Panc1 (cell line): ENCODE measurements at regions of chr1 and their contacts with region 1.

Region 1: DNA sequence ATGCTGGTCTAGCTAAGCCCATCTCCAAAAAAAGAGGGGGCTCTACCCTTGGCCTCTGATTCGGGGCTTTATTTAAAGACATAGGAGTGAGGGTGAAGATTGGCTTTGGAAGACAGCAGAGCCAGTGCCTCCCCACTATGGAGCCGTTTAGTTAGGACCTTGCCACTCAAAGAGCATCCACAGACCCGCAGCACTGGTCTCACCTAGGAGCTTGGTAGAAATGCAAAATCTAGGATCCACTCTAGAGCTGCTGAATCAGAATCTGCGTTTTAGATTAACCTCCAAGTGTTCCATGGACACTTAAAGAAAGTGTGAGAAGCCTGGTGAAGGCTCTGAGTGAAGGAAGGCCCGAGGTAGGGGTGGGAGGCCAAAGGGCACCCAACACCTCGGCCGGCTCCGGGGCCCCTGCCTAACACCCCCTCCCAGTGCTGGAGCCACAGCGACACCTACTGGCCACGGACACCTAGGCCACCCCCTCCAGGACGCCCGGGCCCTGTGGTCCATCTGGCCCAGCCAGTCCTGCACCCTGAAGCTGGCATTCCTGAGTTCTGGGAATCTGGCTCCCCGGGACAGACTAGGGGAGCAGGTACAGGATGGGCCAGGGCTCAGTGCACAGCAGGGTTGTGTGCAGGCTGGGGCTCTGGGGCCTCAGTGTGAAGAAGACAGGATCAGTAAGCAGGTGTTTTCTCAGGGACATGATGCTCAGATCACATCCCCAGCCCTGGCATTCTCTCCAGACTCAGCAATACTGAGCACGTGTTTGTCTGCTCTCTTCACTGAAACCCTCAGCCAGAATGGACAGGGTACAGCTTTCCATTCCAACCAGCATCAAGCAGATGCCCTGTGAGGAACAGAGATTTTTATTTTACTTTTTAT is 79.2 kb downstream of the TMEM53 start:
- DNase-seq: no peak
- ATAC-seq: peak; percentile 98
- H3K4me3 ChIP-seq: no peak overlapping the region
- H3K27ac ChIP-seq: no peak overlapping the region
- H3K4me1 ChIP-seq: no peaks in the 10 kb centered on the region
- H3K27me3 ChIP-seq: no peaks in the 10 kb centered on the region
- CTCF ChIP-seq: peak; percentile 97

Region 2: DNA sequence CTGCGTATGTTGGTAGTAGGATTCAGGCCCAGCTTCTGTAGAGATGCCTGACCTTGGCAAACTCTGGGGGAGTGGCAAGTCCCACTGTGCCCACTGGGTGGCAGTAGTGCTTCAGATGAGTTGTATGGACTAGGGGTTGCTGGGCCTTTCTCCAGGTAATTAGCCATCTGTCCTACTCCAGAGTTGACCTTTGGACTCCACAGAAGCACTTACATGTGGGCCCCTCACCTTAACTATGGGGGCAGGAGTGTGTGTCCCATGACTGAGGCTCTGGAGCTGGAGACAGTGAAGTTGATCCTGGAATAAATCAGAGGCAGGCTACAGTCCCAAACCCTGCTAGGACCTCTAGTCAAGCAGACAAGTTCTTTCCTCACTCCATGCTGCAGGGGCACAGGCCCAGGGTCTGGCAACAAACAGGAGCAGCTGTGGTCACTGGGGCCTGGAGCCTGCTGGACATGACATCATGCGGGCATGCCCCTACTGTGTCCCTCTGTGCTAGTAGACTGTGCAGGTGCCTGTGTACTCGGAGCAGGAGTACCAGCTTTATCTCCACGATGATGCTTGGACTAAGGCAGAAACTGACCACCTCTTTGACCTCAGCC is 377.2 kb before region 1 on chr1:
- CTCF ChIA-PET with region 1: interaction called, 5 read pairs
- POLR2A ChIA-PET with region 1: no interaction called
- in situ Hi-C with region 1: no loop called
- intact Hi-C with region 1: loop called (anchors 5 kb)
- DNase-seq: peak; percentile 61
- ATAC-seq: peak; percentile 78
- H3K4me3 ChIP-seq: no peak overlapping the region
- H3K27ac ChIP-seq: no peak overlapping the region
- H3K4me1 ChIP-seq: peaks cover 5% of the 10 kb centered on the region
- H3K27me3 ChIP-seq: no peaks in the 10 kb centered on the region
- CTCF ChIP-seq: peak; percentile 94

Region 3: DNA sequence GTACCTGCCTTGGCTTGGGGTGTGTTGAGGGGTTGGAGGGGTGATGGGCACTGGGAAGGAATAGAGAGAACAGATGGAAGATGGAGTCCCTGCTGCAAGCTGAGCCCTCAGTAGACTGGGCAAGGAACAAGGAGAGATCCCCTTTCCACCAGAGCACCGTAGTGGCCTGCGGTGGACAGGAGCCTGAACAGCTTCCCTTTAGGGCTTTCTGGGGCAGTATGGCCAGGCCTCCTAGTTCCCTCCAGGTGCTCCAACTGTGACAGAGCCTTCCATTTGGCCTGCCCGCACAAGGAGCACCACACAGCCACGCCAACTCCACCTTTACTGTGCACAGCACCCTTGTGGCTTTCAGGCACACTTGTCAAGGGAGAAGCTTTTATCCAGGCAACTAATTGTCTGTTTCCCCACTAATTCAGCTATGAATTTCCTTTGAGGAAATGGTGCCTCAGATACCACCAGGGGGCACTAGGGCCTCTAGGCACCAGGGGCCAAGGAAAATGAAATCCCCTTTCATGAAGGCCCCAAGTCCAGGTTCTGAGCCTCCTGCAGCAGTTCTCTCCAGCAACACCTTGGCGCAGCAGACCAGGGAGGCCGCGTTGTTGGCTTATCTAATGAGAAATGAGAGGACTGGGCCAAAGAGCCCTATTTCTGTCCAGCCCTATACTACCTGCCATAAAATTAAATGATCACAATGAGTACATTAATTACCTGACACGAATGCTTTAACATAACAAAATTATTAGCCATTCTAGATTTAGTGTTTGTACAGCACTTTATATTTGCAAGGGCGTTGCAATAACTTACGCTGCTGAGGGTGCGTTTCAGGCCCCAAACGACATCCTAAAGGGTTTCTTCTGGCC is 217.0 kb before region 1 on chr1:
- CTCF ChIA-PET with region 1: interaction called, 11 read pairs
- POLR2A ChIA-PET with region 1: no interaction called
- in situ Hi-C with region 1: no loop called
- intact Hi-C with region 1: loop called (anchors 2 kb)
- DNase-seq: no peak
- ATAC-seq: peak; percentile 81
- H3K4me3 ChIP-seq: no peak overlapping the region
- H3K27ac ChIP-seq: no peak overlapping the region
- H3K4me1 ChIP-seq: no peaks in the 10 kb centered on the region
- H3K27me3 ChIP-seq: no peaks in the 10 kb centered on the region
- CTCF ChIP-seq: peak; percentile 83

Region 4: DNA sequence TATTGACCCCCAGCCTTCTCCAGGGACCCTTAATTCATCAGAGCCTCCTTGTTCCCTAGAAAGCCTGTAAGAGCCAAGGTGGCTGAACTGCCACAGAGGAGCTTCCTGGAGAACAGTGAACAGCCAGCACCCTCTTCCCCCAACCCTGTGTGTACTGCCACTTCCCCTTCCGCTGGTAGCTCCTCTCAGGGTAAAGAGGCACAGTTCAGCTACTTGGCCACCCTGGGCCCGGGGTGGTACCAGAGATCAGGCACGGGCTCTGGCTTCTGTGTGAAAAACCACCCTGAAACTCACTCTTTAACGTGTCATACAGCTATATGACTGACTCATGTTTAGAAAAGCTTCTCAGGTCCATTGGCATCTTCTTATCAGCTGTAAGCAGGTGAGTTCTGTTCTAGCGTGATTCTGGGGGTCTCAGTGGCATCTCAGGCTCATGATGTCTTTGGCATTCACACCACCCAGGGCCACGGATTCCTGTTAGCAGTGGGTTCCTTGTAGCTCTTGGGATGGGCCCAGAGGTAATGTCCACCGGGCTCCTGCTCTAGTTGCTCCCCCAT is 101.8 kb after region 1 on chr1:
- CTCF ChIA-PET with region 1: no interaction called
- POLR2A ChIA-PET with region 1: no interaction called
- in situ Hi-C with region 1: no loop called
- intact Hi-C with region 1: no loop called
- DNase-seq: no peak
- ATAC-seq: no peak
- H3K4me3 ChIP-seq: no peak overlapping the region
- H3K27ac ChIP-seq: no peak overlapping the region
- H3K4me1 ChIP-seq: no peaks in the 10 kb centered on the region
- H3K27me3 ChIP-seq: no peaks in the 10 kb centered on the region
- CTCF ChIP-seq: no peak

Region 5: DNA sequence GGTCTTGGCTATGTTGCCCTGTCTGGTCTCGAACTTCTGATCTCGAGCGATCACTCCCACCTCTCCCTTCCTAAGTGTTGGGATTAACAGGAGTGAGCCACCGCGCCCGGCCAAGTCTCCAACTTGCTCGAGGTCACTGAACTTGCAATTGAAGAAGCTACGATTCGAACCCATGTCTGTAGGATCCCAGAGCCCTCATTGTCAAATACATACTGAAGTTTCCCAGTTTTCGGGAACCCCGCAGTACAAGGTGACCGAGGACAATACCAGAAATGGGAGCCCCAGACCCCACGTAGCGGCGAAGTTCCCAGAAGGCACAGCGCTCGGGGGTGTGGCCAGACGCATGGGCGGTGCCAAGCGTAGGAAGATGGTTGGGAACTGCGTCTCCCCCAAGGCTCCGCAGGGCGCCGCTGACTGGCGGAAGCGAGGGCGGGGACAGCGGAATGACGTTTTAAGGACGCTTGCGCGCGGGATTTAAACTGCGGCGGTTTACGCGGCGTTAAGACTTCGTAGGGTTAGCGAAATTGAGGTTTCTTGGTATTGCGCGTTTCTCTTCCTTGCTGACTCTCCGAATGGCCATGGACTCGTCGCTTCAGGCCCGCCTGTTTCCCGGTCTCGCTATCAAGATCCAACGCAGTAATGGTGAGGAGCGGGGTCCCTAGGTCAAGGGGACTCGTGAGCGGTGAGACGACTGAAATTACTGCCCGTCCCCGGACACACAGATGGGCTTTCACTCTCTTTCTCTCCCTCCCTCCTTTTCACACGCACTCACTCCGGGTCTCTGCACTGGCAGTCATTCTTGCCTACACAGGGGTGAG is 144.5 kb after region 1 on chr1 and contains the start of gene KIF2C:
- CTCF ChIA-PET with region 1: no interaction called
- POLR2A ChIA-PET with region 1: no interaction called
- in situ Hi-C with region 1: no loop called
- intact Hi-C with region 1: no loop called
- DNase-seq: peak; percentile 94
- ATAC-seq: peak; percentile 99
- H3K4me3 ChIP-seq: peak within 1 kb of the TSS; percentile 80 to 93
- H3K27ac ChIP-seq: peak within 1 kb of the TSS; percentile 95
- H3K4me1 ChIP-seq: peaks cover 7% of the 10 kb centered on the region; the same call in 1 of the 2 replicates
- H3K27me3 ChIP-seq: no peaks in the 10 kb centered on the region
- CTCF ChIP-seq: no peak
- total RNA-seq, gene KIF2C: 69.4 TPM